Dorsolateral prefrontal cortex (tissue), 120 donors: ENCODE measurements at regions of chr22 and their contacts with region 1.

Region 1: GRCh38 chr22:31749636-31750364 is at the start of gene PRR14L:
- DNase-seq: peak; percentile 96 to 100 (median 98)
- H3K4me3 ChIP-seq: peak within 1 kb of the TSS; percentile 66 to 100 (median 98)
- H3K27ac ChIP-seq: peak within 1 kb of the TSS; percentile 4 to 96 (median 84)
- H3K27me3 ChIP-seq: no peaks in the 10 kb centered on the region
- CTCF ChIP-seq: peak in 53 of 56 donors; percentile 9 to 70 (median 44)
- total RNA-seq, gene PRR14L: 40.6 to 84.1 (median 61.9) TPM

Region 2: DNA sequence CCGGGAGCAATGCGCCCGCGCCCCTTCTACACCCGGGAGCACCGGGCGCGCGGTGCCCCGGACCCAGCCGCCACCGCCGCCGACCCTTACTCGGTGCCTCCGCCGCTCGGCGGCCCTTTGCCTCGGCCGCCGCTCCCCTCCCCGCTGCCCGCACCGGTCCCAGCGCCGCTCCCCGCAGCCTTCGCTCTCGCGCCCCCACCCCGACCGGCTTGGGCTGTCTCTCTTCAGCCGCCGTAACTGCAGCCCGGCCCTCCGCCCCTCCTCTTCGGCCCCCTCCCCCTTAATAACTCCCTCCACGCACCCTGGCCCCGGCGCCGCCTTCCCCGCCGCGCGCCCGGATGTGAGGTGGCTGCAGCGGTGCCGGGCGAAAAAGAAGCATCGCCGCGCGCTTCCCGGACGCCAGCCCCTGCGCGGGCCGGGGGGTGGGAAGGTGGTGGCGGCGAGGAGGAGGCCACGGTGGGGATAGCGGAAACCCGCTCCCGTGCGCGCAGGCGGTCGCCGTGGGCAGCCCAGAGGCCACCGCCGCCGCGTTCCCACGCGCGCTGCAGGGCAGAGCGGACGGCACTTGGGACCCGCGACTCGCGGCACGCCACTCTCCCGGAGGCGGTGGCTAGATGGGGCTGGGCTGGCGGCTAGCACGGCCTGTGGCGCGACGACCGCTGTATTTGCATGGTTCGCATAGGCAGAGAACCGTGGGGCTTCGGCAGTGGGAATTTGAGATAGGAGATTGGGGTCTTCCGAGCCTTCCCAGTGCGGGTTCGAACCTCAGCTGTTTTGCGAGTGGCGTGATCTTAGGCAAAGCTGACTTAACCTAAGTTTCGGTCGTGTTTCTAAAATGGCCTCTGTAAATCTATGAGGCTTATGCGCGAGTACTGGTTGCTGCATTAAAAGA is 259.9 kb before region 1 on chr22 and contains the start of gene EIF4ENIF1:
- intact Hi-C with region 1: loop called (anchors 2 to 10 kb)
- DNase-seq: peak; percentile 77 to 89 (median 84)
- H3K4me3 ChIP-seq: peak within 1 kb of the TSS; percentile 66 to 96 (median 88)
- H3K27ac ChIP-seq: peak within 1 kb of the TSS; percentile 82 to 99 (median 97)
- H3K27me3 ChIP-seq: no peaks in the 10 kb centered on the region
- CTCF ChIP-seq: peak in 14 of 56 donors; percentile 2 to 34 (median 14)
- total RNA-seq, gene EIF4ENIF1: 35.4 to 72.5 (median 51.8) TPM

Region 3: DNA sequence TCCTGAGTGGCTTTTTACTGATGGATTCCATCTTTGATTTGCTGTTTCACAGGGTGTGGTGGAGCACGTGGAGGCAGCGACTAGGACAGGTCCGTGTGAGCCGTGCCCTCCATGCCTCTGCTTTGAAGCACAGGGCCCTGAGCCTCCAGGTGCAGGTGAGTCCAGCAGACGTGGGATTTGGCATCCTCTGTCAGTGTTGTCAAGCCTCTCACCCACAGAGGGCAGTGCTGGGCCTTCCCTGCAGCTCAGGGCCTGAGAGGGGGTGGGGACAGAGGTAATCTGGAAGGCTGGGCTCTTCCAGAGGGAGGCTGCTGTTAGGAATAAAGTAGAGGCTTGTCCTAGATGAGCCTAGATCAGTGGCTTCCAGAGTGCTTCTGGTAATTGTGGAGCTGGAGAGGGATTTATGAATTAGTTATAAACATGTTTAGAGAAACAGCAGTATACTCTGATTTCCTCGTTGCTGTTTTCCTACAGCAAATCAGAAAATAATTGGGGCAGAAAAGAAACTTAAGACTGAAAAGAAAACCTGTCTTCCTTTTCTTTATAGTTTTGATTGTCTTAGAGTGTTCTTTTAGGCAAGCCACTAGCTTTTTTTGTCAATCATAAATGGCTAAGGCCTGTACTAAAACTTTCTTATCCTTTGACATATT is 188.4 kb before region 1 on chr22:
- intact Hi-C with region 1: loop called in 1 of 2 experiments (anchors 10 kb)
- DNase-seq: peak; percentile 47 to 92 (median 74)
- H3K4me3 ChIP-seq: no peak overlapping the region
- H3K27ac ChIP-seq: peak overlapping the region in 34 of 59 donors; percentile 0 to 70 (median 39)
- H3K27me3 ChIP-seq: no peaks in the 10 kb centered on the region
- CTCF ChIP-seq: peak; percentile 27 to 87 (median 75)

Region 4: GRCh38 chr22:31676700-31677099 is 73.1 kb before region 1 on chr22:
- intact Hi-C with region 1: loop called in 1 of 2 experiments (anchors 5 kb)
- DNase-seq: peak; percentile 80 to 96 (median 94)
- H3K4me3 ChIP-seq: peak overlapping the region; percentile 14 to 76 (median 58)
- H3K27ac ChIP-seq: peak overlapping the region in 48 of 59 donors; percentile 7 to 82 (median 64)
- H3K27me3 ChIP-seq: no peaks in the 10 kb centered on the region
- CTCF ChIP-seq: peak in 5 of 56 donors; percentile 11 to 22 (median 17)

Region 5: GRCh38 chr22:31970490-31971444 is 221.0 kb after region 1 on chr22:
- intact Hi-C with region 1: loop called in 1 of 2 experiments (anchors 2 kb)
- DNase-seq: peak; percentile 75 to 93 (median 83)
- H3K4me3 ChIP-seq: peak overlapping the region; percentile 41 to 78 (median 60)
- H3K27ac ChIP-seq: peak overlapping the region in 45 of 59 donors; percentile 2 to 85 (median 55)
- H3K27me3 ChIP-seq: no peaks in the 10 kb centered on the region
- CTCF ChIP-seq: peak; percentile 71 to 98 (median 90)